K562 (cell line): ENCODE measurements at regions of chr4 and their contacts with region 1.

Region 1: GRCh38 chr4:16213121-16213520 is 13.2 kb downstream of the TAPT1 start:
- DNase-seq: no peak
- ATAC-seq: peak; percentile 28; the same call in 1 of the 3 replicates
- H3K4me3 ChIP-seq: no peak overlapping the region
- H3K27ac ChIP-seq: no peak overlapping the region
- H3K4me1 ChIP-seq: no peaks in the 10 kb centered on the region; a peak in 1 of 5 replicates
- H3K27me3 ChIP-seq: no peaks in the 10 kb centered on the region
- CTCF ChIP-seq: no peak
- EP300 ChIP-seq: no peak
- POLR2A ChIP-seq: no peak
- RAD21 ChIP-seq: no peak

Region 2: DNA sequence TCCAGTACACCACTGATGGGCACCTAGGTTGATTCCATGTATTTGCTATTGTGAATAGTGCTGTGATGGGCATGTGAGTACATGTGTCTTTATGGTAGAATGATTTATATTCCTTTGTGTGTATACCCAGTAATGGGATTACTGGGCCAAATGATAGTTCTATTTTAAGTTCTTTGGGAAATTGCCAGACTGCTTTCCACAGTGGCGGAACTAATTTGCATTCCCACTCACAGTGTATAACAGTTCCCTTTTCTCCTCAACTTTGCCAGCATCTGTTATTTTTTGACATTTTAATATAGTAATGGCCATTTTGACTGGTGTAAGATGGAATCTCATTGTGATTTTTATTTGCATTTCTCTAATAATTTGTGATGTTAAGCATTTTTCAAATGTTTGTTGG is 717.5 kb before region 1 on chr4:
- CTCF ChIA-PET with region 1: no interaction called
- POLR2A ChIA-PET with region 1: no interaction called
- in situ Hi-C with region 1: no loop called
- intact Hi-C with region 1: no loop called
- DNase-seq: no peak
- ATAC-seq: no peak
- H3K4me3 ChIP-seq: no peak overlapping the region
- H3K27ac ChIP-seq: no peak overlapping the region
- H3K4me1 ChIP-seq: no peaks in the 10 kb centered on the region
- H3K27me3 ChIP-seq: peaks cover 0 to 3% of the 10 kb centered on the region in 2 experiments; a peak in 1 of 5 replicates
- CTCF ChIP-seq: no peak
- EP300 ChIP-seq: no peak
- POLR2A ChIP-seq: no peak
- RAD21 ChIP-seq: no peak

Region 3: DNA sequence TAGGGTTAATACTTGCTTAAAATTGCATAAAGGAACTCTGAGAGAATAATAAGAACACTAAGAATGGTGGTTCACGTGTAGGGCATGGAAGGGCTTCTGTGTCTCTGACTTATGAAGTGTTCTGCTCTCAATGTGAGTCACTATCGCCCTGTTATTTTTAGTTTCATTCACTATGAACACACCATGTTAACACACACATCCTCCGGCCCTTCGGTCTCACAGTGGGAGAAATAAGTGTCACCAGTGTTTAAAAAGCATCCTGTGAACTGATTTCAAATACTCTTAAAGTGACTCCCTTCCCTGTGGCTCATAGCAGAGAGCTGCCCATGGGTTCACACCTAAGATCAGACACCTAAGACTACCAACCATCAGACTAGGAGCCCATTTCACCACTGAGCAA is 216.3 kb before region 1 on chr4:
- CTCF ChIA-PET with region 1: no interaction called
- POLR2A ChIA-PET with region 1: no interaction called
- in situ Hi-C with region 1: no loop called
- intact Hi-C with region 1: no loop called
- DNase-seq: no peak
- ATAC-seq: no peak
- H3K4me3 ChIP-seq: no peak overlapping the region
- H3K27ac ChIP-seq: no peak overlapping the region
- H3K4me1 ChIP-seq: no peaks in the 10 kb centered on the region
- H3K27me3 ChIP-seq: peaks cover 3 to 25% of the 10 kb centered on the region in 2 experiments; a peak in 3 of 5 replicates
- CTCF ChIP-seq: no peak
- EP300 ChIP-seq: no peak
- POLR2A ChIP-seq: no peak
- RAD21 ChIP-seq: no peak

Region 4: DNA sequence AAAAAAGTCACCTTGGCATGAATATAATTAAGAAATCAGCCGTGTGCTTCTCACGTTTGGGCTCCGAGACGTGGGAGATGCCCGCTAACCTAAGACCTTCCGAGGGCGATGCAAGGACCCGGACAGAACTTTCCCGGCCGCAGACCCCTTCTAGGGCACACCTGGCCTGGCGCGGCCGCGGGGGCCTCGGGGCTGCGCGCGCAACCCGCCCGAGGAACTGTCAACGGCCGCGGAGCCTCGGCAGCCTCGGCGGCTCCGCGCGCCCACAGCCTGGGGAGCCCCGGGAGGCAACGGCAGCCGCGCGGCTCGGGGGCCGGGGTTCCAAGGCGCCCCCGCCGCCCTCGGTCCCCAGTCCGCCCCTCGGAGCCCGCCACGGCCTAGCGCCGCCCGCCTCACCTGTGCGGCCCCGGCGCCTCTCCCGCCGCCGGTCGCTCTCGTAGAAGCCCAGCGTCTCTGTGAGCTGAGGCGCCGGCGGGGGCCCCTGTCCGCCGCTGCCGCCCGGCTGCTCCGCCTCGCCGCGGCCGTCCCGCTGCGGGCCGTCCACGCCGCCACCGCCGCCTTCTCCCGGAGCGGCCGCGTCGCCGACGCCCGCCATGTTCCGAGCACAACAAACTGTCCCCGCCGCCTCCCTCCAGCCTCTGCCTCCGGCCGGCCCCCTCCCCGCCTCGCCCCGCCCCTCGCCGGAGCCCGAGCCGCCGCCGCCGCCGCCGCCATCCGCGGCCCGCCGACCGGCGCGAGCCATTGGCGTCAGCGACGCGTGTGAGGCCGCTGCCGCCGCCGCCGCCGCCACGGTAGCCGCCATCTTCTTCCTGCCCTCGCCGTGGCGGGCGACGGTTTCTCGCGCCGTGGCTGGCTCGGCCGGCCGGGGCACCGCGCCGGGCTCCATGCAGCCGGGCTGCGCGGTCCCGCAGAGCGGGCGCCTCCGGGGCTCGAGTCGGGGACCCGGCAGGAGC is 13.0 kb after region 1 on chr4 and contains the start of gene TAPT1:
- CTCF ChIA-PET with region 1: no interaction called
- POLR2A ChIA-PET with region 1: interaction called, 17 read pairs
- in situ Hi-C with region 1: no loop called
- intact Hi-C with region 1: no loop called
- DNase-seq: peak; percentile 80 to 84 (median 82)
- ATAC-seq: peak; percentile 57
- H3K4me3 ChIP-seq: peak within 1 kb of the TSS; percentile 81
- H3K27ac ChIP-seq: peak within 1 kb of the TSS; percentile 91
- H3K4me1 ChIP-seq: peaks cover 6 to 12% of the 10 kb centered on the region in 2 experiments; a peak in 4 of 5 replicates
- H3K27me3 ChIP-seq: no peaks in the 10 kb centered on the region
- CTCF ChIP-seq: no peak
- EP300 ChIP-seq: no peak
- POLR2A ChIP-seq: no peak
- RAD21 ChIP-seq: no peak
- polyA plus RNA-seq, gene TAPT1: 1.6 to 2.7 TPM